GM10248 (cell line): ENCODE measurements at regions of chr12 and their contacts with region 1.

Region 1: GRCh38 chr12:49740930-49741881 is at the start of gene TMBIM6:
- DNase-seq: peak; percentile 95
- CTCF ChIP-seq: peak; percentile 95

Region 2: DNA sequence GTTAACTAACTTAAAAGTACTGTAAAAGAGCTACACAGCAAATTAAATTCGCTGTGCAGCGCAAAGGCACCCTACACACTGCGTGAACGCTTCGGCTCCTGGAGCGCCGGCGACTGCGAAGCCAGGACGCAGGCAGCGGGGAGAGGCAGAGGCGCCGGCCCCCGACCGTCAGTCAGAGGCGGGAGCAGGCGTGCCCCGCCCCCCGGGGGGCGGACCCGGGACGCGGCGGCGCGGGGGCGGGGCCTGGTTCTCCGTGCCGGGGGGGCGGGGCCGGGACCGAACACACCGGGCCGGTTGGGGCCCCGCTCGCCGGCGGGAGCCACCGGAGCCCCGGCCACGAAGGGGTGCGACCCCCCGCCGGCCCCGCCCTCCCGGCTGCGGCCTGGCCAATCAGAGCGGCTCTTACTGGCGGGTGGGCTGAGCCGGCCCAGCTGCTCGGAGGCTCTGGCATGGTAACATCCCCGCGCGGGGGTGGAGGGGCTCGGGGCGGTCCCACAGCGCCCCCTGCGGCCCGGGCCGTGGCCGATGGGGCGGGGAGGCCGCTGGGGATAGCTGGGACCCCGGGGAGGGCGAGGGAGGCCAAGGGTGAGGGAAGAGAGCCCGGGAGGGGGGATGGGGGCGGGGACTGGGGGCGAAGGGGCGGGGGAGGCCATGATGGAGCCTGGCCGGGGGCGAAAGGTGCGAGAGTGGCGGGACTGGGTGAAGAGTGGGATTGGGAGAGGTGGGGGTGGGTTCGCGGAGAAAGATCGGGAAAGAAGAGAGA is 117.9 kb before region 1 on chr12 and contains the start of gene PRPF40B:
- CTCF ChIA-PET with region 1: interaction called, 17 read pairs
- POLR2A ChIA-PET with region 1: interaction called, 7 read pairs
- DNase-seq: peak; percentile 96
- CTCF ChIP-seq: peak; percentile 70

Region 3: GRCh38 chr12:49644620-49644994 is 96.6 kb before region 1 on chr12:
- CTCF ChIA-PET with region 1: interaction called, 15 read pairs
- POLR2A ChIA-PET with region 1: interaction called, 6 read pairs
- DNase-seq: peak; percentile 87
- CTCF ChIP-seq: peak; percentile 88

Region 4: GRCh38 chr12:49707128-49707811 is 33.9 kb before region 1 on chr12 and contains the start of gene FMNL3:
- CTCF ChIA-PET with region 1: interaction called, 48 read pairs
- POLR2A ChIA-PET with region 1: interaction called, 11 read pairs
- DNase-seq: peak; percentile 99
- CTCF ChIP-seq: peak; percentile 91

Region 5: GRCh38 chr12:49763006-49763591 is 21.9 kb after region 1 on chr12:
- CTCF ChIA-PET with region 1: interaction called, 51 read pairs
- POLR2A ChIA-PET with region 1: interaction called, 9 read pairs
- DNase-seq: peak; percentile 78
- CTCF ChIP-seq: peak; percentile 85

Region 6: DNA sequence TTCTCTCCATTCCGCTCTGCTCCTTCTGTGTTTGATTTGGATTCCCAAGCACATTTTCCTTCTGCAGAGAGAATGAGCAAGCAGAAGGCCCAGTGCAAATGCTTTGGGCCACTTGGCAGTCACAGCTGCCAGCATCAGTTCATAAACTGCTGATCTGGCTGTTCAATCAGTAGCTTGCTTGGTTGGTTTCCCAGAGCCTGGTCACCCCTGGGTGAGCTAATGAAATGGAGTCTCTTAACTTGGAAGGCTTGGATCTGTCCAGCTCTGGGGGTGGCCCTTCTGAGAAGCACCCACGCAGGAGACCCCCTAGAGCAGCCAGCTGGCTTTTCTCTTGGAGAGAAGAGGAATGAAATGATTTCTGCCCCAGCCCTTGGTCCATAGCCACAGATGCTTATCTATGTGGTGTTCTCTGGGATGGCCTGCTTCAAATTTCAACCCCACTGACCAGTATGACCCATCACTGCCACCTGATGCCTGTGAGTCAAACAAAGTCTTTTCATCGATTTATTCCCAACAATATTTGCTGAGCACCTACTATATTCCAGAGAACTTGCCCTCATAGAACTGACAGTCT is 132.2 kb after region 1 on chr12:
- CTCF ChIA-PET with region 1: no interaction called
- POLR2A ChIA-PET with region 1: no interaction called
- DNase-seq: no peak
- CTCF ChIP-seq: no peak

Region 7: GRCh38 chr12:50167041-50167828 is 426.0 kb after region 1 on chr12 and contains the start of gene CERS5:
- CTCF ChIA-PET with region 1: no interaction called
- POLR2A ChIA-PET with region 1: no interaction called
- DNase-seq: peak; percentile 100
- CTCF ChIP-seq: no peak